K562 (cell line): ENCODE measurements at regions of chr22 and their contacts with region 1.

Region 1: DNA sequence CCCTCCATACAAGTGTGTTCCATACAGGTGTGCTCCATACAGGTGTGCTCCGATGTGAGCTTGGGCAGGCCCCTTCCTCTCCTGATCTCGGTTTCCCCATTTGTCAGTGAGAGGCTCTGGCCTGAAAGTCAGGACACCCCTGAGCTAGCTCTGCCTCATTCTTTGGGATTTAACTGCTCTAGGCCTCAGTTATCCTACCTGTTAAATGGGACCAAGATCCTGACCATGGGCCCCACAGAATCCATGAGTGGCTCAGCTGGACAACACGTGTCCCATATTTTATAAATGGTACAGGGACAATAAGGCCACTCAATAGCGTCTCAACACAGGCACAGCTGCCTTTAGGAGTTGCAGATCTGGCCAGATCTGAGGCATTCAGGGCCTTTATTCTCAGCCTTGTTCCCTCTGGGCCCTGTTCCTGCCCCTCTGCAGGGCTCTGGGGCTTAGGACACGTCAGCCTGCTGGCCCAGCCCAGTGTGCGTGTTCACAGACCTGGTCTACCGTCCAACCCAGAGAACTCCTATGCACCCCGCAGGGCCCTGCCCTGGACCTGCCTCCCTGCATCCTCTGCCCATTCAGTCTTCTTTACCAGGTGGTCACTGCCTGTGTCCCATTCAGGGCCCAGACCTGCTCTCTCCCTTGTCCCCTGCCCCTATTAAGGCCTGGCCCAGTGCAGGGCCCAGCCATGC is 18.9 kb upstream of the IGLL1 start:
- DNase-seq: no peak
- ATAC-seq: no peak
- H3K4me3 ChIP-seq: no peak overlapping the region
- H3K27ac ChIP-seq: no peak overlapping the region
- H3K4me1 ChIP-seq: no peaks in the 10 kb centered on the region; a peak in 1 of 5 replicates
- H3K27me3 ChIP-seq: peaks cover 0 to 3% of the 10 kb centered on the region in 2 experiments; a peak in 2 of 5 replicates
- CTCF ChIP-seq: no peak
- EP300 ChIP-seq: no peak
- POLR2A ChIP-seq: no peak
- RAD21 ChIP-seq: no peak

Region 2: GRCh38 chr22:25437414-25438160 is 1838.6 kb after region 1 on chr22:
- CTCF ChIA-PET with region 1: no interaction called
- POLR2A ChIA-PET with region 1: no interaction called
- in situ Hi-C with region 1: loop called (anchors 5 kb)
- intact Hi-C with region 1: no loop called
- DNase-seq: no peak
- ATAC-seq: no peak
- H3K4me3 ChIP-seq: no peak overlapping the region
- H3K27ac ChIP-seq: no peak overlapping the region
- H3K4me1 ChIP-seq: no peaks in the 10 kb centered on the region; a peak in 1 of 5 replicates
- H3K27me3 ChIP-seq: no peaks in the 10 kb centered on the region
- CTCF ChIP-seq: no peak
- EP300 ChIP-seq: no peak
- POLR2A ChIP-seq: no peak
- RAD21 ChIP-seq: no peak